Endothelial cell of umbilical vein (primary cell): ENCODE measurements at regions of chrX and their contacts with region 1.

Region 1: GRCh38 chrX:43836435-43837184 is 45.6 kb downstream of the MAOB start:
- DNase-seq: peak; percentile 35
- H3K4me3 ChIP-seq: no peak overlapping the region
- H3K27ac ChIP-seq: no peak overlapping the region
- H3K4me1 ChIP-seq: no peaks in the 10 kb centered on the region
- H3K27me3 ChIP-seq: peaks cover 0 to 1% of the 10 kb centered on the region in 2 experiments
- CTCF ChIP-seq: peak; percentile 4 to 10
- POLR2A ChIP-seq: no peak

Region 2: DNA sequence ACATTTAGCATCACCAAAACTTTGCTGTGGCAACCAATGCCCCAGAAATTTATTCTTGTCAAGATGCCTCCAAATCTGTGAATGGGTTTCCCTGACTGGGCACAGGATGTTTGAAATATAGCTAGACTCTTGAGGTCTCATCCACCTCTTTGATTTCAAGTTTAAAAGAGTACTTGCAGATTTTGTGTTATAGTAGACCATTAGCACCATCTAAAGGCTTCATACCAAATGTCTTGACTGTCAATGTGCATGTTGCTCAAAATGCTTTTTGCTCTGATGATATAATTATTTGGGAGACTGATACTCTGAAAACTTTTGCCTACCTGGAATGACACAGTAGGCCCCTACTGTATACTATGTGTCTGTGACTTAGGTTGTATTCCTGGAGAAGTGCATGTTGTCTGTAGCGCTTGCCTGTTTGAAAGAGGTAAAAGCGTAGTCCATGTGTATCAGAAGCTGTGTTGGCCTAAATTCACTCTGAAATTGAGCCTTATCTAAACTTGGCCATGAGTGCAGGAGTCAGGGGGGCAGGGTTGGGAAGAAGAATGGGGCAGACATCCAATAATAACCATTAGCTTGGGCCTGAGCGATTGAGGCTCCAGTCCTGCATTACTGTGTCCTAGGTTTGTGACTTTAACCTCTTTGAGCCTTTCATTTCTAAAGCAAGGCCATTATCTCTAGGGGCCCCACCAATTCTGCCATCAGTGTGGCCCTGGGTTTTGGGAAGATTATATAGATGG is 102.7 kb after region 1 on chrX:
- CTCF ChIA-PET with region 1: interaction called, 42 read pairs
- POLR2A ChIA-PET with region 1: no interaction called
- dilution Hi-C with region 1: no loop called
- intact Hi-C with region 1: loop called (anchors 2 kb)
- DNase-seq: no peak
- H3K4me3 ChIP-seq: no peak overlapping the region
- H3K27ac ChIP-seq: no peak overlapping the region
- H3K4me1 ChIP-seq: peaks cover 7% of the 10 kb centered on the region
- H3K27me3 ChIP-seq: no peaks in the 10 kb centered on the region
- CTCF ChIP-seq: no peak
- POLR2A ChIP-seq: no peak

Region 3: GRCh38 chrX:44025555-44025954 is 188.9 kb after region 1 on chrX:
- CTCF ChIA-PET with region 1: interaction called, 5 read pairs
- POLR2A ChIA-PET with region 1: no interaction called
- dilution Hi-C with region 1: no loop called
- intact Hi-C with region 1: loop called (anchors 5 kb)
- DNase-seq: peak; percentile 3
- H3K4me3 ChIP-seq: no peak overlapping the region
- H3K27ac ChIP-seq: no peak overlapping the region
- H3K4me1 ChIP-seq: no peaks in the 10 kb centered on the region
- H3K27me3 ChIP-seq: no peaks in the 10 kb centered on the region
- CTCF ChIP-seq: no peak
- POLR2A ChIP-seq: no peak

Region 4: GRCh38 chrX:44244008-44244407 is 407.4 kb after region 1 on chrX:
- CTCF ChIA-PET with region 1: interaction called, 52 read pairs
- POLR2A ChIA-PET with region 1: no interaction called
- dilution Hi-C with region 1: no loop called
- intact Hi-C with region 1: loop called (anchors 2 kb)
- DNase-seq: peak; percentile 34
- H3K4me3 ChIP-seq: no peak overlapping the region
- H3K27ac ChIP-seq: no peak overlapping the region
- H3K4me1 ChIP-seq: no peaks in the 10 kb centered on the region
- H3K27me3 ChIP-seq: no peaks in the 10 kb centered on the region
- CTCF ChIP-seq: peak in 1 of 2 donors; percentile 31
- POLR2A ChIP-seq: no peak